ENCODE measurements at regions of chr17 and their contacts with region 1.

Region 1: GRCh38 chr17:41428591-41429291 is 4.4 kb upstream of the KRT37 start:
- DNase-seq: no peak
- H3K4me3 ChIP-seq: no peak overlapping the region
- H3K27ac ChIP-seq: no peak overlapping the region
- H3K4me1 ChIP-seq: no peaks in the 10 kb centered on the region
- H3K27me3 ChIP-seq: no peaks in the 10 kb centered on the region
- CTCF ChIP-seq: no peak

Region 2: DNA sequence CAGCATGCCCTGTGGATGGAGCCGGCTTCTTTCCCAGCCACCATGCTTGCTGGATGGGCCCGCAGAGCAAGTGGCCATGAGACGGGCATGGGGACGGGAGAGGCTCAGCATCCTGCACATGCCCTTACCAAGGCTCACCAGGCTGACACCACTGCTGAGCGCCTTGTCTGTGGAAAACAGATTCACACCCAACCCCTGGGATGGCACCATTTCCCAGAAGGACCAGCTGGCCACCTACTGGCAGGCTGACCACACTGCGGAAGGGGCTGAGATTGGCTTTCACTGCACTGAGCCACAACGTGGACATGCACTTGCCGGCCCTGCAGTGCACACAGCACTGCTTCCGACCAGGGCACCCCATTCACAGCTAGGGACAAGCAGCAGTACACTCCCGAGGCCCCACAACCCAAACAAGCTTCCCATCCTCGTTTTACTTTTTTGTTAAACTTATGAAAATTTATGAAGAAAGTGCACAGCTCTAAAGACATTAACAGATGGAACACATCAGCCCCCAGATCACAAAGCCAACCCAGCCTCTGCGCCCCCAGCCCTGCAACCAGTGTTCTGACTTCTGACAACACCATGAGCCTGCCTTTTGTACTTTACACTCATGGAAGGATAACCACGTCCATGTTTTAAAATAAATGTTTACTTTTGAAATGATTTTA is 99.3 kb before region 1 on chr17:
- CTCF ChIA-PET with region 1: no interaction called
- dilution Hi-C with region 1: no loop called
- in situ Hi-C with region 1: no loop called
- intact Hi-C with region 1: no loop called
- DNase-seq: peak; percentile 52
- H3K4me3 ChIP-seq: no peak overlapping the region
- H3K27ac ChIP-seq: no peak overlapping the region
- H3K4me1 ChIP-seq: peaks cover under 1% of the 10 kb centered on the region
- H3K27me3 ChIP-seq: no peaks in the 10 kb centered on the region
- CTCF ChIP-seq: peak; percentile 88 to 96

Region 3: GRCh38 chr17:41387670-41388069 is 41.1 kb before region 1 on chr17:
- CTCF ChIA-PET with region 1: no interaction called
- dilution Hi-C with region 1: loop called (anchors 5 kb)
- in situ Hi-C with region 1: no loop called
- intact Hi-C with region 1: no loop called
- DNase-seq: no peak
- H3K4me3 ChIP-seq: no peak overlapping the region
- H3K27ac ChIP-seq: no peak overlapping the region
- H3K4me1 ChIP-seq: no peaks in the 10 kb centered on the region
- H3K27me3 ChIP-seq: no peaks in the 10 kb centered on the region
- CTCF ChIP-seq: no peak

Region 4: DNA sequence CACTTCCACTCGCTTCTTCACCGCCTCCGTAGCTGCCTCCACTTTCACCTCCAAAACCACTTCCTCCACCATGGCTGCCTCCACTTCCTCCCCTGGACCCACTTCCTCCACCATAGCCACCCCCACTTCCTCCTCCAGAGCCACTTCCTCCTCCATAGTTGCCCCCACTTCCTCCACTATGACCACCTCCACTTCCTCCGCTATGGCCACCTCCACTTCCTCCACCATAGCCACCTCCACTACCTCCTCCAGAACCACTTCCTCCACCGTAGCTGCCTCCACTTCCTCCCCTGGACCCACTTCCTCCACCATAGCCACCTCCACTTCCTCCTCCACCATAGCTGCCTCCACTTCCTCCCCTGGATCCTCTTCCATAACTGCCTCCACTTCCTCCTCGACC is 138.6 kb after region 1 on chr17:
- CTCF ChIA-PET with region 1: no interaction called
- dilution Hi-C with region 1: no loop called
- in situ Hi-C with region 1: no loop called
- intact Hi-C with region 1: no loop called
- DNase-seq: no peak
- H3K4me3 ChIP-seq: no peak overlapping the region
- H3K27ac ChIP-seq: no peak overlapping the region
- H3K4me1 ChIP-seq: no peaks in the 10 kb centered on the region
- H3K27me3 ChIP-seq: no peaks in the 10 kb centered on the region
- CTCF ChIP-seq: no peak